Activated B cell treated with CpG ODN at 0.5 μM for 24 hours (primary cell): ENCODE measurements at regions of chrX and their contacts with region 1.

Region 1: GRCh38 chrX:136711147-136711546 is 63.2 kb downstream of the CD40LG start:
- DNase-seq: no peak
- ATAC-seq: peak; percentile 42
- H3K4me3 Mint-ChIP-seq: peak overlapping the region; percentile 45
- H3K27ac Mint-ChIP-seq: peak overlapping the region; percentile 98
- H3K4me1 Mint-ChIP-seq: peaks cover 42% of the 10 kb centered on the region
- H3K27me3 Mint-ChIP-seq: no peaks in the 10 kb centered on the region
- CTCF ChIP-seq: no peak

Region 2: GRCh38 chrX:135951291-135951690 is 759.9 kb before region 1 on chrX:
- CTCF ChIA-PET with region 1: no interaction called
- POLR2A ChIA-PET with region 1: no interaction called
- intact Hi-C with region 1: no loop called
- DNase-seq: no peak
- ATAC-seq: no peak
- H3K4me3 Mint-ChIP-seq: no peak overlapping the region
- H3K27ac Mint-ChIP-seq: no peak overlapping the region
- H3K4me1 Mint-ChIP-seq: no peaks in the 10 kb centered on the region
- H3K27me3 Mint-ChIP-seq: no peaks in the 10 kb centered on the region
- CTCF ChIP-seq: no peak

Region 3: DNA sequence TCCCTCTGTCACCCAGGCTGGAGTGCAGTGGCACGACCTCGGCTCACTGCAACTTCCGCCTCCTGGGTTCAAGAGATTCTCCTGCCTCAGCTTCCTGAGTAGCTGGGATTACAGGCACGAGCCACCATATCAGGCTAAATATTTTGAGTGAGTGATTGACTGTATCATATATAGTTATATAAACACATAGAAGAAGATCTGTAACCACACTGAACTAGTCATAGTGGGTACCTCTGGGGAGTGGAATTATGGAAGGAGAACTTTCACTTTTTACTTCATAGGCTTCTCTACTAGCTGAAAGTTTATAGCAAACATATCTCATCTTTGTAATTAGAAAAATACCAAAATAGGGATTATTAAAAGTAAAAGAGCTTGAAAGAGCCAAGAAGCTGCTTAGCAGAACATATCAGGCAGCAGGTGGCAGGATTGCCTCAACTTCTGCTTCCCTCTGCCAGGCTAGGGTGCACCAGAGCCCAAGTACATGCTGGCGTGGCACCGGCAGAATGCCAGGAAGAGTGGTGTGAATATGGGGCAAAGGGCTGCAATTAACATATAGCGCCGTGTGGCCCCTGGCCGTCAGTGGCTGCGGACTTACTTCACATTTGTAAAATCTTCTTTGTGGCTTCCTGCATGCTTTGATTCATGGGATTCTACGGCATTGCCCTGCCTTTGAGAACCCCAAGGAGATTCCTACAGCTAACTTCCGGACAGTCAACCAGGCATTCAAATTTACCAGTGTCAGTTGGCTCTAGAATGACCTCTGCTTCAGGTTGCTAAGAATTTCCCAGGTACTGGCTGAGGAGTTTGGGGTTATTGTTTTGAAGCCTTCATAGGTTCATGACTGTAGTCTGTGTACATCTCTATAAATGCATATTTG is 102.6 kb before region 1 on chrX:
- CTCF ChIA-PET with region 1: no interaction called
- POLR2A ChIA-PET with region 1: interaction called, 3 read pairs
- intact Hi-C with region 1: loop called (anchors 1 kb)
- DNase-seq: peak; percentile 16
- ATAC-seq: peak; percentile 60
- H3K4me3 Mint-ChIP-seq: no peak overlapping the region
- H3K27ac Mint-ChIP-seq: no peak overlapping the region
- H3K4me1 Mint-ChIP-seq: peaks cover 5% of the 10 kb centered on the region
- H3K27me3 Mint-ChIP-seq: no peaks in the 10 kb centered on the region
- CTCF ChIP-seq: no peak

Region 4: GRCh38 chrX:136725446-136726104 is 14.4 kb after region 1 on chrX:
- CTCF ChIA-PET with region 1: interaction called, 3 read pairs
- POLR2A ChIA-PET with region 1: interaction called, 3 read pairs
- intact Hi-C with region 1: loop called (anchors 2 kb)
- DNase-seq: no peak
- ATAC-seq: no peak
- H3K4me3 Mint-ChIP-seq: no peak overlapping the region
- H3K27ac Mint-ChIP-seq: no peak overlapping the region
- H3K4me1 Mint-ChIP-seq: peaks cover 19% of the 10 kb centered on the region
- H3K27me3 Mint-ChIP-seq: no peaks in the 10 kb centered on the region
- CTCF ChIP-seq: no peak

Region 5: DNA sequence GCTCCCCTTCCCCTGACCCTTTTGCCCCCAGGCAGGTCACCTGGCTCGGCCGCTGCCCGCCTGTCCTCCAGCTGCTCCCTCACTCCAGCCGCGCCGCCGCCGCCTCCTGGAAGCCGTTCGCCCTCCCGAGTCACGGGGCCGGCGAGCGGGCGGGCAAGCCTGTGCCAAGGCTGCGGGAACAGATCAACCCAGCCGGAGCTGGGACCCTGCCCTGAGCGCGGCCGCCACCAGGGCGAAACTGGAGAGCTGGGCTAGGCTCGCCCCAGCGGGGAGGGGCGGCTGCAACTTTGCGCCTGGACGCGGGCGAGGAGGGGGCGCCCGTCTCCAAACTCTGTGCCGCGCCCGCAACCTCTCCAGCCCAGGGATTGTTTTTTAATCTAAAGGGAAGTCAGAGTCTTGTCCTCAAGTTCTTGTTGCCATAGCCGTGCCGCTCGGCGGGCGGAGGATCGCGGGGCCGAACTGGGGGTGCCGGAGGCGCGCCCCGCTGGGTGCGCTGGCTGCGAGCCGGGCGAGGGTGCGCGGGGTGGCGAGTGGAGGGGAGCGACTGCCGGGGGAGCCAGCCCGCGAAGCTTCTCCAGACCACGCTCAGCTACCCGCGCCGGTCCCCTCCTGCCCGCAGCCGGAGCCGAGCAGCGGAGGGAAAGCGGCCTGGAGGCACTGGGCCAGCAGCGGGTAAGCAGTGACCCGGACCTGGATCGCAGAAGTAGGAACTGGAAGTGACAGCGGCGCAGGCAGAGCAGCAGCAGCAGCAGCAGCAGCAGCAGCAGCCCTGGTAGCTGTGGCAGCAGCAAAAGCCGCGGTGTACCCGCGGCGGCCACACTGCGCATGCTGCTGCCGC is 56.2 kb after region 1 on chrX:
- CTCF ChIA-PET with region 1: interaction called, 8 read pairs
- POLR2A ChIA-PET with region 1: interaction called, 10 read pairs
- intact Hi-C with region 1: loop called (anchors 1 kb)
- DNase-seq: peak; percentile 46
- ATAC-seq: peak; percentile 80
- H3K4me3 Mint-ChIP-seq: peak overlapping the region; percentile 78
- H3K27ac Mint-ChIP-seq: peak overlapping the region; percentile 87
- H3K4me1 Mint-ChIP-seq: peaks cover 49% of the 10 kb centered on the region
- H3K27me3 Mint-ChIP-seq: no peaks in the 10 kb centered on the region
- CTCF ChIP-seq: no peak

Region 6: DNA sequence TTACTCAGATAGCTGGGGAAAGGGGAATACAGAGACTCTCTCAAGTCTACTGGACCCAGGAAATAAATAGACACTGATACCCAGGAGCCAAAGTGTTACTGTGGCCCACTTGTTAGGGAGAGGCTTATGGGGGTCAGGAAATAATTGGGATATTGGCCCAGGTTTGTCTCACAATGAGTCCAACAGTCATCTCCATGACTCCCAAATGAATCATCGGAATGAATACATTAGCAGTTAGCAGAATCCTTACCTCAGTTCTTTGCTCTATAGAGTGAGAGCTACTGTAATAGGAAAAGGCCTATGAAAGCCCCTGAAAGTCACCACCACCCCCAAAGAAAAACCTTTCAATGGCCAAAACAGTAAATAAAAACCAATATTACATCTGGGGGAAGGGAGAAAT is 112.0 kb after region 1 on chrX:
- CTCF ChIA-PET with region 1: no interaction called
- POLR2A ChIA-PET with region 1: no interaction called
- intact Hi-C with region 1: no loop called
- DNase-seq: no peak
- ATAC-seq: no peak
- H3K4me3 Mint-ChIP-seq: no peak overlapping the region
- H3K27ac Mint-ChIP-seq: no peak overlapping the region
- H3K4me1 Mint-ChIP-seq: no peaks in the 10 kb centered on the region
- H3K27me3 Mint-ChIP-seq: no peaks in the 10 kb centered on the region
- CTCF ChIP-seq: no peak

Region 7: DNA sequence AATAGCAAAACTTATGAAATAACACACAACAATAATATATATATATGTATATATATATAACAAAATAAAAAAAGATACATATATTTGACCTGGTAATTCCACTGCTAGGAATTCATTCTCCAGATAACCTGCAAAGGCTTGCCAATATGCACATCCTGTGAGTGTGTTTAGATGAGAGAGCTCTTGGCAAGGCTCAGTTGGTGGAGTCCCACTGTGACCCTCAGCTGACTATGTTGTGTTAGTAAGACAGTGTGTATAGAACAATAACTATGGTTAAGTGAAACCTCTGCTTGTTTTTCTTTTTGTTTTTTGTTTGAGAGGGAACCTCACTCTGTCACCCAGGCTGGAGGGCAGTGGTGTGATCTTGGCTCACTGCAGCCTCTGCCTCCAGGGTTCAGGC is 208.9 kb after region 1 on chrX:
- CTCF ChIA-PET with region 1: interaction called, 16 read pairs
- POLR2A ChIA-PET with region 1: no interaction called
- intact Hi-C with region 1: loop called (anchors 1 kb)
- DNase-seq: no peak
- ATAC-seq: no peak
- H3K4me3 Mint-ChIP-seq: no peak overlapping the region
- H3K27ac Mint-ChIP-seq: no peak overlapping the region
- H3K4me1 Mint-ChIP-seq: peaks cover 1% of the 10 kb centered on the region
- H3K27me3 Mint-ChIP-seq: no peaks in the 10 kb centered on the region
- CTCF ChIP-seq: no peak